ENCODE measurements at regions of chr17 and their contacts with region 1.

Region 1: DNA sequence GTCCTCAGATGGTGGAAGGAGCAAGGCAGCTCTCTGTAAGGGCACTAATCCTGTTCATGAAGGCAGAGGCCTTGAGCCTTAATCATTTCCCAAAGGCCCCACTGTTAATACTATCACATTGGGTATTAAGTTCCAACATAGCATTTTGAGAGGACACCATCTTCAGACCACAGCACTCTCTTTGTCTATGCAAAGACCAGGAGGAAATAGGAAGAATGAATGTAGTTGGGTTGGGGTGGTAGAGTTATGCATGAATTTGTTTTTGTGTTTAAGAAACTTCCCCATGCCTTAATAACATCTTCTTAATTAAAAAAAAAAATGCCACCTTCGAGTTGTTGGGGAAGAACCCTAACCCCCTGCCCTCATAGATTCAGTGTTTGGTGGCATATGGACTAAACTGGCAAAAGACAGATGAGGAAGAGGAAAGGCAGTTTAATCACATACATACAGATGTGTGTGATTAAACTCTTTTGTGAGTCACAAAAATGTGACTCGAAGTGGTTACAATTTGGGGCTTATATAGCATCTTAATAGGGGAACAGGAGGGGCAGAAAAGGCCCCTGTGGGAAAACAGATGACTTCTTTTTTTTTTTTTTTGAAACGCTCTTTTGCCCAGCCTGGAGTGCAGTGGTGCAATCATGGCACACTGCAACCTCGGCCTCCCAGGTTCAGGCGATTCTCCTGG is 35.0 kb upstream of the SLC5A10 start:
- DNase-seq: no peak
- H3K4me3 ChIP-seq: no peak overlapping the region
- H3K27ac ChIP-seq: no peak overlapping the region
- H3K4me1 ChIP-seq: peaks cover 14% of the 10 kb centered on the region
- H3K27me3 ChIP-seq: no peaks in the 10 kb centered on the region
- CTCF ChIP-seq: no peak
- POLR2A ChIP-seq: no peak

Region 2: GRCh38 chr17:18896146-18896545 is 20.8 kb before region 1 on chr17:
- intact Hi-C with region 1: loop called (anchors 1 kb)
- DNase-seq: no peak
- H3K4me3 ChIP-seq: no peak overlapping the region
- H3K27ac ChIP-seq: no peak overlapping the region
- H3K4me1 ChIP-seq: no peaks in the 10 kb centered on the region
- H3K27me3 ChIP-seq: no peaks in the 10 kb centered on the region
- CTCF ChIP-seq: no peak
- POLR2A ChIP-seq: no peak

Measured in vagina (tissue), 2 donors.